Heart right ventricle (tissue), 16 donors: ENCODE measurements at regions of chr9 and their contacts with region 1.

Region 1: DNA sequence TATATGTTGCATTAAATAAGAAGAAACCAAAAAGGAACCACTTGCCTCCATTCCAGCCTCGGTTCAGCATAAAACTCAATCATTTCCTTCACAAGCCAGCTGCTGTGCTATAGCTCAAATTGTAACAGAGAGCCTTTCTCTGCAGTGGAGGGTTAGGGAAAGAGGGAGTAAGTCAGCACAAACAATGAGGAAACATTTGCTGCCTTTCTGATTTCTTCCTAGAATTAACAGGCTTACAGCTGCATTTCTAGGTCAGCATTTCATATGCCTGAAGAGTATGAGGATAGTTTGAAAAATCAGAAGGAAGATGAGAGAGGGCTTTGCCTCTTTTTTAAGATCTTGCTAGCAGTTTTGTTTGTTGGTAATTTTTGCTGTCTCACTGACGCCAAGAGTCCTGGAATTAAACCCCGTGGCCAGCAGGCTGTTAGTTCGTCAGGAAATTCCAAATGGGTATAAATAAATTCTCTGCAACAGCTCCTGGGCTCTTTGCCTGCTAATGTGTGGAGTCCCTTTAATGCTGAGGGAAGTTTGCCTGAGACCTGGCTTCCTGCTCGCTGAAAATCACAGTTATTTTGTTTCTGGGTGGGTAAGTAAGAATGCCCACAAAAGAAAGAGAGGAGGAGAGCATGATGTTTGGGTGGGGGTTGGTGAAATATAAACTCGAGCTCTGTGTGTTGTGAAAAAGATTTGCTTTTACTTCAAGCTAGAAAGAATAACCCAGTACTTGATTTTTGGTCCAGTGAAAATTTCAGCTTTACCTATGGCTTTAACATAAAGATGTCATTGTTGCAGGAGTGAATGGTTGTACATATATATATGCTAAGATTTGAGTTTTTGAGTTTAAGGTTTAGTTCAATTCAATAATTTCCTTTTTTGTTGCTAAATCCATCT is 148.1 kb upstream of the DMRT1 start:
- DNase-seq: peak in 1 of 2 donors; percentile 81
- ATAC-seq: peak; percentile 53 to 87 (median 76)
- H3K4me3 ChIP-seq: peak overlapping the region in 9 of 10 donors; percentile 26 to 55 (median 46)
- H3K27ac ChIP-seq: peak overlapping the region; percentile 84 to 95 (median 90)
- H3K4me1 ChIP-seq: peaks cover 6 to 83% (median 67%) of the 10 kb centered on the region in 9 donors
- H3K27me3 ChIP-seq: no peaks in the 10 kb centered on the region
- CTCF ChIP-seq: no peak

Region 2: GRCh38 chr9:626596-626995 is 66.8 kb before region 1 on chr9:
- intact Hi-C with region 1: loop called in 1 of 10 experiments (anchors 10 kb)
- DNase-seq: no peak
- ATAC-seq: peak in 5 of 8 donors; percentile 18 to 57 (median 27)
- H3K4me3 ChIP-seq: peak overlapping the region in 3 of 10 donors; percentile 6 to 25 (median 16)
- H3K27ac ChIP-seq: peak overlapping the region in 8 of 10 donors; percentile 37 to 69 (median 50)
- H3K4me1 ChIP-seq: peaks cover 11 to 60% (median 40%) of the 10 kb centered on the region in 9 donors
- H3K27me3 ChIP-seq: no peaks in the 10 kb centered on the region
- CTCF ChIP-seq: no peak

Region 3: GRCh38 chr9:638152-638551 is 55.3 kb before region 1 on chr9:
- intact Hi-C with region 1: no loop called
- DNase-seq: no peak
- ATAC-seq: no peak
- H3K4me3 ChIP-seq: no peak overlapping the region
- H3K27ac ChIP-seq: peak overlapping the region in 4 of 10 donors; percentile 15 to 40 (median 24)
- H3K4me1 ChIP-seq: peaks cover 0 to 34% (median 15%) of the 10 kb centered on the region in 9 donors
- H3K27me3 ChIP-seq: no peaks in the 10 kb centered on the region
- CTCF ChIP-seq: no peak

Region 4: GRCh38 chr9:655875-656274 is 37.6 kb before region 1 on chr9:
- intact Hi-C with region 1: loop called in 1 of 10 experiments (anchors 5 kb)
- DNase-seq: peak; percentile 93
- ATAC-seq: peak; percentile 69 to 90 (median 82)
- H3K4me3 ChIP-seq: no peak overlapping the region
- H3K27ac ChIP-seq: peak overlapping the region; percentile 23 to 90 (median 76)
- H3K4me1 ChIP-seq: peaks cover 0 to 79% (median 55%) of the 10 kb centered on the region in 9 donors
- H3K27me3 ChIP-seq: no peaks in the 10 kb centered on the region
- CTCF ChIP-seq: no peak

Region 5: GRCh38 chr9:738209-738915 is 44.9 kb after region 1 on chr9:
- intact Hi-C with region 1: loop called in 3 of 10 experiments (anchors 5 kb)
- DNase-seq: peak; percentile 42 to 76
- ATAC-seq: peak; percentile 70 to 89 (median 82)
- H3K4me3 ChIP-seq: no peak overlapping the region
- H3K27ac ChIP-seq: peak overlapping the region; percentile 37 to 94 (median 87)
- H3K4me1 ChIP-seq: peaks cover 24 to 75% (median 52%) of the 10 kb centered on the region in 9 donors
- H3K27me3 ChIP-seq: no peaks in the 10 kb centered on the region
- CTCF ChIP-seq: no peak

Region 6: GRCh38 chr9:1619915-1620710 is 926.7 kb after region 1 on chr9:
- intact Hi-C with region 1: no loop called
- DNase-seq: no peak
- ATAC-seq: no peak
- H3K4me3 ChIP-seq: no peak overlapping the region
- H3K27ac ChIP-seq: no peak overlapping the region
- H3K4me1 ChIP-seq: no peaks in the 10 kb centered on the region
- H3K27me3 ChIP-seq: peaks cover 0 to 17% (median 0%) of the 10 kb centered on the region in 7 donors
- CTCF ChIP-seq: peak in 7 of 9 donors; percentile 18 to 39 (median 28)